BJ (cell line): ENCODE measurements at regions of chr9 and their contacts with region 1.

Region 1: DNA sequence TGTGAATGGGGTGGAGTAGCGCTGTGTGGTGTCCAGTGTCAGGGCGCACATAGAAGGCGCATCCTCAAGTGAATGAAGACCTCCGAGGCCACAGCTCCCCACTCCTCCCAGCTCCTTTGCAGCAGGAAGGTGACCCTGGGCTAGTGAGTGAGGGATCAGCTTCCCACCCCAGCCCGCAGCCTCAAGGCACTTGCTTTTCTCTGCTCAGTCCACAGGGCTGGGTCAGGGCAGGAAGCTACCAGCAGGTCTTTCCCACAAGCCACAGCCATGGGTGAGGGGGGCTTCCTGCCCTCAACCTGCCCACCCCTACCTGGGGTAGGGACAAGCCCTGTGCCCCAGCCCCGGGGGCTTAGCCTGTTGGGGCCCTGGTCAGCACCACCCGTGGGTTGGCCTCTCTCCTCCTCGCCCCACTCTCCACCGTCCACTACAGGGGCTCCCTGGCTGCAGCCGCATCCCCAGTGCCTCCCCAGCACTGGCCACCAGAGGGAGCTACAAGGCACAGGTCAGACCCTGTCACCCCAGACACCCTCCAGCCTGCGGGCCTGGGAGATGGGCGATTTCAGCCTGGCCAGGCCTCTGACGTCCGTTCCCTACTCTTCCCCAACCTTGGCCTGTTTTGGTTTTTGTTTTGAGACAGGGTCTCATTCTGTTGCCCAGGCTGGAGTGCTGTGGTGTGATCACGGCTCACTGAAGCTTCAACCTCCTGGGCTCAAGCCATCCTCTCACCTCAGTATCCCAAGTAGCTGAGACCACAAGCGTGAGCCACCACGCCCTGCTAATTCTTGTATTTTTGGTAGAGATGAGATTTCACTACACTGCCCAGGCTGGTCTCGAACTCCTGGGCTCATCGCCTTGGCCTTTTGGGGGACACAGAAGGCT is 1.3 kb upstream of the ABCA2 start:
- DNase-seq: no peak
- H3K4me3 ChIP-seq: no peak overlapping the region; the same call in 1 of the 2 replicates
- H3K27me3 ChIP-seq: no peaks in the 10 kb centered on the region
- CTCF ChIP-seq: peak; percentile 95

Region 2: GRCh38 chr9:136840140-136840687 is 189.1 kb before region 1 on chr9:
- CTCF ChIA-PET with region 1: interaction called, 22 read pairs
- POLR2A ChIA-PET with region 1: no interaction called
- DNase-seq: no peak
- H3K4me3 ChIP-seq: no peak overlapping the region
- H3K27me3 ChIP-seq: peaks cover 1% of the 10 kb centered on the region; the same call in 1 of the 2 replicates
- CTCF ChIP-seq: no peak

Region 3: DNA sequence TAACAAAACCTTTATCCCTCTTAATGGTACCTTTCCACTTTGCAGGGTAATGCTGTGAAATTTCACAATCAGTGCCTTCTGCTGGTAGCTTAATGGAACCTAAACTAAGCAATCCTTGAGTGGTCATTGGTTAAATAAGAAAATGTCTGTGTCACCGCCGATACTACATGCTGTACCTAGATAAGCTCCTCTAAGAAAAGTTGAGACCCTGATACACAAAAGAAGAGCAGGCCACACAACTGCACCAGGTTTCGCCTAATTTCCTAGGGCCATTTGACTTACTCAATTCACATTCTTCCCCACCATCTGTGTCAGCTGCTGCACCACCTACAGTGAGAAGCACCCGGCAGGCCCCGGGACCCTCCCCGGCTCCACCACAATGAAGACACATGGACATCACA is 154.1 kb before region 1 on chr9:
- CTCF ChIA-PET with region 1: no interaction called
- POLR2A ChIA-PET with region 1: no interaction called
- DNase-seq: no peak
- H3K4me3 ChIP-seq: no peak overlapping the region
- H3K27me3 ChIP-seq: no peaks in the 10 kb centered on the region
- CTCF ChIP-seq: no peak

Region 4: DNA sequence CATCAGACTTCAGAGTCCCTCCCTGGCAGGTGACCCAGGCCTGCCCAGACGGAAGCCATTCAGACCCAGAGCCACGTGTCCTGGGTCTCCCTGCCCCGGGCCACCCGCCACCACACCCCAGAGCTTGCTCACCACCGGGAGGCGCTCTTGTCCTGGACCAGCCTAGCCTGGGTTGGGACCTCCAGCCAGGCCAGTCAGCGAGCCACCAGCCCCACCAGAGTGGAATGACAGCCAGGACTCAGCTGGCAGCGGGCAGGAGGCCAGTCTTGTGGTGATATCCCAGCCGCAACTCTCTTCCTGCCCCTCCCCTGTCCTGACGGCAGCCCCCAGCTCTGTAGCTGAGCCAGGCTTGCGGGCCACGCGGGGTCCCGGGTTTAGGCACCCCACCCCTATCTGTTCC is 53.7 kb before region 1 on chr9:
- CTCF ChIA-PET with region 1: interaction called, 11 read pairs
- POLR2A ChIA-PET with region 1: no interaction called
- DNase-seq: no peak
- H3K4me3 ChIP-seq: no peak overlapping the region
- H3K27me3 ChIP-seq: no peaks in the 10 kb centered on the region
- CTCF ChIP-seq: 0 out of 2 replicates have a peak, but pooled peaks have one; percentile 13

Region 5: DNA sequence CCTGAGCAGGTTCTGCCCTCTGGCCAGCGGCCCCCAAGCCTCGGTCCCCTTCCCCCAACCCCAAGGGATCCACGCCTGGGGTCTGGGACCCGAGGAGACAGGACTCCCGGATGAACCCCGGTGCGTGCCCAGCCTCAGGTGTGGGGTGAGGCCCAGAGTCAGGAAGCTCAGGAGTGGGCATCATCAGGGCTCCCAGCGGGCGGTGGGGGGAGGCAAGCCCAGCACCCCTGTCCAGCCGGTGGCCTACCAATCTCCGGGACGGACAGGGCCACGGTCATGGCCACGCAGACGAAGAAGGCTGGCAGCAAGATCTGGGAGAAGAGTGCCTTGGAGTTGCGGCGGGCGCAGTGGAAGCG is 15.7 kb before region 1 on chr9:
- CTCF ChIA-PET with region 1: interaction called, 50 read pairs
- POLR2A ChIA-PET with region 1: no interaction called
- DNase-seq: no peak
- H3K4me3 ChIP-seq: no peak overlapping the region
- H3K27me3 ChIP-seq: no peaks in the 10 kb centered on the region
- CTCF ChIP-seq: no peak

Region 6: DNA sequence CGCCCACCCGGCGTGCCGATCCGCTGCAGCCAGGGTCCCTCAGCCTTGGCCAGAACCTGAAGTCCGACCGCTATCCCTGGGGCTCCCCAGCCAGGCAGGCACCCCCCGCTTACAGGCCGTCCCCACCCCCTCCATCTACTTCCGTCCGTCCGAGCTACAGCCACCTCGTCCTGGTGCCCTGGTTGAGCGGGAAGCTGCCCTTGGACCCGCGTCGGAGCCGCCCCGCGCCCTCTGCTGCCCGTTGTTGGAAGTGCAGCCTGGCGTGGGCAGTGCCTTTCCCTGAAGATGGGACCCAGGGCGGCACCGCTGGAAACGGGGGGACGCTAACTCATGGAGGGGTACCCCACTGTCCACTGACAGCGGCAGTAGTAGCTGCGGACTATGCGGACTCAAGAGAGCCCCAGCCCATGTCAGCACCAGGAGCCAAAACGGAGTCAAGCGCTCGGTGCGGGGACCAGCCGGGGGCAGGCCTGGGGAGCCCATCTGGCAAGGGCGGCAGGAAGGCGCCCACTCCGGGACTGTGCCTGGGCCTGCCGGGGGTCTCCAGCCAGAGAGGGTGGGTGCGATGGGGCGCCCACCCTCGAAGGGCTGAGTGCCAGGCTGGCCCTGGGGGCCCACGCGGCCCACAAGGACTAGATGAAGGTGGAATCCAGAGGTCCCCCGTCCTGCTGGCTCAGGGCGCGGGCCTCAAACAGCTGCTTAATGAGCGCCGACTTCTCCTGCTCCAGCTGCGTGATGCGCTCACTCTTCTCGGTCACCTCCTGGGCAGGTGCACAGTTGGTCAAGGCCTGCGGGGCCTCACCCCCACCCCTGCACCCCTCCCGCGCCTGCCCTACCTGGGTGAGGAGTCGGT is 35.0 kb after region 1 on chr9:
- CTCF ChIA-PET with region 1: interaction called, 20 read pairs
- POLR2A ChIA-PET with region 1: no interaction called
- DNase-seq: no peak
- H3K4me3 ChIP-seq: no peak overlapping the region
- H3K27me3 ChIP-seq: no peaks in the 10 kb centered on the region
- CTCF ChIP-seq: peak; percentile 96

Region 7: DNA sequence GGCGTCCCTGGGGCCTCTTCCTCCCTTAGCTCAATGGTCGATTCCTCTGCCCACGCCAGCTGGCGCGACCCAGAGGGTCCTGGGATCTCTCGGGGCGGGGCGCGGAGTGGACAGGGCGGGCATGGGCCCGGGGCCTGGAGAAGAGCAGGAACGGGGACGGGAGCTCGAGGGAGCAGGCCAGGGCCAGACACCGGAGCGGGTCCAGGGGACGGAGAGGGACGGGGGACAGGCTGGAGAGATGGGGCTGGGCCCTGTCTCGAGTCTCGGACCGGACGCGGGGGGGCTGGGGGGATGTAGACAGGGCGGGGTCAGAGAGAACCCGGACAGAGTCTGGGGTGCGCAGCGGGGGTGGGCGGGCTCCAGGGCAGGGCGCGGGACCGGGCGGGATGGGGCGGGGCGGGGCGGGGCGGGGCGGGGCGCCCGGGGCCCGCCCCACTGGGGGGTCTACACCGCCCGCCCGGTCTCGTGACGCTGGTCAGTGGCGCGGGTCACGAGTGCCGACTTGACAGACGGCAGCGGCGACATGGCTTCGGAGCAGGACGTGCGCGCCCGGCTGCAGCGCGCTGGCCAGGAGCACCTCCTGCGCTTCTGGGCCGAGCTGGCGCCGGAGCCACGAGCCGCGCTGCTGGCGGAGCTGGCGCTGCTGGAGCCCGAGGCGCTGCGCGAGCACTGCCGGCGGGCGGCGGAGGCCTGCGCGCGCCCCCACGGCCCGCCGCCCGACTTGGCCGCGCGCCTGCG is 47.9 kb after region 1 on chr9 and contains the start of gene UAP1L1:
- CTCF ChIA-PET with region 1: interaction called, 10 read pairs
- POLR2A ChIA-PET with region 1: no interaction called
- DNase-seq: no peak
- H3K4me3 ChIP-seq: peak within 1 kb of the TSS; percentile 75
- H3K27me3 ChIP-seq: no peaks in the 10 kb centered on the region
- CTCF ChIP-seq: no peak
- polyA plus RNA-seq, gene UAP1L1: 2.8 and 5.6 TPM in 2 replicates